ENCODE measurements at regions of chr6 and their contacts with region 1.

Region 1: GRCh38 chr6:30672445-30673253 is at the start of gene DHX16:
- DNase-seq: peak; percentile 97
- ATAC-seq: peak; percentile 88
- H3K4me3 ChIP-seq: peak within 1 kb of the TSS; percentile 85 to 100 (median 98)
- H3K4me3 Mint-ChIP-seq: peak within 1 kb of the TSS; percentile 84
- H3K27ac ChIP-seq: peak within 1 kb of the TSS; percentile 54 to 75
- H3K27ac Mint-ChIP-seq: peak within 1 kb of the TSS; percentile 87
- H3K4me1 ChIP-seq: peaks cover 10 to 19% of the 10 kb centered on the region in 2 donors
- H3K4me1 Mint-ChIP-seq: peaks cover 29% of the 10 kb centered on the region
- H3K27me3 ChIP-seq: no peaks in the 10 kb centered on the region
- H3K27me3 Mint-ChIP-seq: no peaks in the 10 kb centered on the region
- CTCF ChIP-seq: peak; percentile 79
- total RNA-seq, gene DHX16: 51.1 and 58.3 TPM in 2 replicates

Region 2: DNA sequence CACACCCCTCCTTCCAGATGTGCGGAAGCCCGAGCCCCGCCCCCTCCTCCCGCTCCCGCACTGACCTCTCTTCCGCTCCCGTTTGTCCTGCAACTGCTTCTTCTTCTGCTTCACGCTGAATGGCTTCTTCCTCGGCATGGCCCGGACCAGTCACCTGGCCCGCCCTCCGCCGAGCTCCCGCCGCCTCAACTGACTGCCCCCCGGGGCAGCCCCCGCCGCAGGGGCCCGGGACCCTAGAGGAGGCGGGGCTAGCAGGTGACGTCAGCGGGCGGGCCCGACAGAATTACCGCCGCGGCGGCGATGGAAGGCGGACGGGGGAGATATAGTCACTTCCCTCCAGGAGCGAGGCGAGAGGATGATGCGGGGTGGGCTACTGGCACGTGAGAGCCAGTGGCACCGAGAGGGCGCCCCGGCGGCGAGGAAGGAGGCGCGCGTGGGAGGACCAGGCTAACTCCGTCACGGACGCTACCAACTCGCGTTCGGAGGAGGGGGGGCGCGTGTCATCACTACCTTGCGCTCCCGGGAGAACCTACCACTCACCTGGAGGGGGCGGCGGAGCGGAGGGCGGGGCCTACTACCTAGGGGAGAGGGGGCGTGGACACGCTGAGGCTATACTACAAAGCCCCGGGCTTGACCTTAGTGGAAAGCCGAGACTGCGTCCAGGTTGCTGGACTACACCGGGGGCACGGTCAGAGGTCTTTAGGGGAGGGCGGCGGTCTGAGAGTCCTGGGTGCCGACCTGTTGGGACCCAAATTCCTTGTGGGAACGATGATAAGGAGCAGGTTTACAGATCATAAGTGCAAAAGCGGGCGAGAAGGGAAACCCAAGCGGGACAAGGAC is 116.4 kb before region 1 on chr6 and contains the start of gene GNL1:
- CTCF ChIA-PET with region 1: no interaction called
- POLR2A ChIA-PET with region 1: no interaction called
- intact Hi-C with region 1: loop called (anchors 5 kb)
- DNase-seq: peak; percentile 100
- ATAC-seq: peak; percentile 89
- H3K4me3 ChIP-seq: peak within 1 kb of the TSS; percentile 81 to 100 (median 94)
- H3K4me3 Mint-ChIP-seq: peak within 1 kb of the TSS; percentile 99
- H3K27ac ChIP-seq: peak within 1 kb of the TSS; percentile 91 to 95
- H3K27ac Mint-ChIP-seq: peak within 1 kb of the TSS; percentile 99
- H3K4me1 ChIP-seq: peaks cover 19 to 27% of the 10 kb centered on the region in 2 donors
- H3K4me1 Mint-ChIP-seq: peaks cover 32% of the 10 kb centered on the region
- H3K27me3 ChIP-seq: no peaks in the 10 kb centered on the region
- H3K27me3 Mint-ChIP-seq: no peaks in the 10 kb centered on the region
- CTCF ChIP-seq: no peak
- total RNA-seq, gene GNL1: 107 and 109 TPM in 2 replicates

Region 3: DNA sequence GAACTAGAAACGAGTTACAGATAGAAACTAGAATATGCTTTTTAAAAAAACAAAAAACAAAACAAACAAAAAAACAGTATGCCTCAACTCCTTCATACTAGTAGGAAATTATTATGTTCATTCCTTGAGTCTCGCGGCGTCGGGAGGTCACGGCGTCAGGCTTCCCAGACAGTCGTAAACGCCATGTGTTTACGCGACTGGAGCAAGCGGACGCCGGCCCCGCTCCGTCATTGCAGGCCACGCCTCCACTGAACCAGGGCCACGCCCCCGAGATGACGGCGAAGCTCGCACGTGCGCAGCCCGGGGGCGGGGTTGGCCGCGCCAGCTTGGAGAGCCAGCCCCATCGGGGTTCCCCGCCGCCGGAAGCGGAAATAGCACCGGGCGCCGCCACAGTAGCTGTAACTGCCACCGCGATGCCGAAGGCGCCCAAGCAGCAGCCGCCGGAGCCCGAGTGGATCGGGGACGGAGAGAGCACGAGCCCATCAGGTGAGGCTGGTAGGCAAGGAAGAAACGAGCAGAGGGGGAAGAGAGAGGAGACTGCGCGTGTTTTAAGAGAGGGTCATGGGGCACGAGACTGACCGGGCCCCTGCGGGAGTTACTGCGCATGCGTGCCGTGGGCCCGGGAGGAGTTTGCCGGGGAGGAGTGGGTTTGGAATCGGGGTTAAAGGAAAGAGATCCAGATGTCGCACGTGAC is 101.4 kb before region 1 on chr6 and contains the start of gene ABCF1:
- CTCF ChIA-PET with region 1: interaction called, 3 read pairs
- POLR2A ChIA-PET with region 1: interaction called, 3 read pairs
- intact Hi-C with region 1: loop called (anchors 1 kb)
- DNase-seq: peak; percentile 99
- ATAC-seq: peak; percentile 98
- H3K4me3 ChIP-seq: peak within 1 kb of the TSS; percentile 69 to 93 (median 87)
- H3K4me3 Mint-ChIP-seq: peak within 1 kb of the TSS; percentile 96
- H3K27ac ChIP-seq: peak within 1 kb of the TSS; percentile 82 to 92
- H3K27ac Mint-ChIP-seq: peak within 1 kb of the TSS; percentile 93
- H3K4me1 ChIP-seq: peaks cover 25 to 32% of the 10 kb centered on the region in 2 donors
- H3K4me1 Mint-ChIP-seq: peaks cover 54% of the 10 kb centered on the region
- H3K27me3 ChIP-seq: no peaks in the 10 kb centered on the region
- H3K27me3 Mint-ChIP-seq: no peaks in the 10 kb centered on the region
- CTCF ChIP-seq: no peak
- total RNA-seq, gene ABCF1: 60.9 and 63.7 TPM in 2 replicates

Region 4: GRCh38 chr6:30626484-30627366 is 45.9 kb before region 1 on chr6 and contains the start of gene ATAT1:
- CTCF ChIA-PET with region 1: interaction called, 10 read pairs
- POLR2A ChIA-PET with region 1: interaction called, 5 read pairs
- intact Hi-C with region 1: loop called (anchors 1 kb)
- DNase-seq: peak; percentile 93
- ATAC-seq: peak; percentile 99
- H3K4me3 ChIP-seq: peak within 1 kb of the TSS; percentile 60 to 87 (median 72)
- H3K4me3 Mint-ChIP-seq: peak within 1 kb of the TSS; percentile 93
- H3K27ac ChIP-seq: peak within 1 kb of the TSS; percentile 84 to 87
- H3K27ac Mint-ChIP-seq: peak within 1 kb of the TSS; percentile 89
- H3K4me1 ChIP-seq: peaks cover 12 to 18% of the 10 kb centered on the region in 2 donors
- H3K4me1 Mint-ChIP-seq: peaks cover 19% of the 10 kb centered on the region
- H3K27me3 ChIP-seq: no peaks in the 10 kb centered on the region
- H3K27me3 Mint-ChIP-seq: no peaks in the 10 kb centered on the region
- CTCF ChIP-seq: peak; percentile 64
- total RNA-seq, gene ATAT1: 19.3 and 21.5 TPM in 2 replicates

Region 5: DNA sequence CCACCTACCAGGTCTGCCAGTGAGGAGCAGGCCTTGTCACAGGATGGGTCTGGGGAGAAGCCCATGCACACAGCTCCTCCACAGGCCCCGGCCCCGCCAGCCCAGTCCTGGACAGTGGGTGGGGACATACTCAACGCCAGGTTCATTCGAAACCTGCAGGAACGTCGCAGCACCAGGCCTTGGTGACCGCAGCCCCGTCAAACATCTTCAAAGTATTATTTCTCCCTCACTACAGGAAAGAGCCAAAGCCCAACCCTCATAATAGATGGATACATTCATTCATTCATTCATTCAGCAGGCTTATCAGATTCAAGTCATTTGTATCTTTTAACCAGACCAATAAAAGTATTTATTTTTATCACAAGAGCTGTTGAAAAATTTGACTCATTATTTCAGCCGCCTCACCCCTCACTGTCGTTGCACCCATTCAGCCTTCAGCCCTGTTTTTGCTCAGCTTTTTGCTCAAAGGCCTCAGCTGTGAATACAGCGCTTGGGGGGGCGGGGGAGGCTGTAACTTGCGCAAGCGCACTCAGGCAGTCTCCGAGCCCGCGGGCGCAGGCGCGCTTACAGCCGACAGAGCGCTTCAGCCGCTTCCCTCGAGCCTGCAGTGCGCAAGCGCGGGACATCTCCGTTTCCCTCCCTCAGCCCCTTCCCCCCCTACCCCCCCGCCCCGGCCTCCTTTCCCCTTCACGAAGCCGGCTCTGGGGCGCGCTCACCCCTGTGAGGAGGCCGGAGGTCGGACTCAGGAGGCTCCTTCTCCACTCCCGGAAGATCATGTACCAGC is 26.0 kb before region 1 on chr6 and contains the start of gene C6orf136:
- CTCF ChIA-PET with region 1: interaction called, 4 read pairs
- POLR2A ChIA-PET with region 1: interaction called, 4 read pairs
- intact Hi-C with region 1: loop called (anchors 1 kb)
- DNase-seq: peak; percentile 95
- ATAC-seq: peak; percentile 77
- H3K4me3 ChIP-seq: peak within 1 kb of the TSS; percentile 24 to 93 (median 80)
- H3K4me3 Mint-ChIP-seq: peak within 1 kb of the TSS; percentile 89
- H3K27ac ChIP-seq: peak within 1 kb of the TSS; percentile 76 to 89
- H3K27ac Mint-ChIP-seq: peak within 1 kb of the TSS; percentile 95
- H3K4me1 ChIP-seq: peaks cover 12 to 21% of the 10 kb centered on the region in 2 donors
- H3K4me1 Mint-ChIP-seq: peaks cover 28% of the 10 kb centered on the region
- H3K27me3 ChIP-seq: no peaks in the 10 kb centered on the region
- H3K27me3 Mint-ChIP-seq: no peaks in the 10 kb centered on the region
- CTCF ChIP-seq: no peak
- total RNA-seq, gene C6orf136: 24.9 and 37.2 TPM in 2 replicates

Region 6: GRCh38 chr6:30686908-30687658 is 14.4 kb after region 1 on chr6:
- CTCF ChIA-PET with region 1: interaction called, 123 read pairs
- POLR2A ChIA-PET with region 1: interaction called, 7 read pairs
- intact Hi-C with region 1: loop called (anchors 1 kb)
- DNase-seq: peak; percentile 90
- ATAC-seq: peak; percentile 55
- H3K4me3 ChIP-seq: peak overlapping the region; percentile 40 to 100 (median 93)
- H3K4me3 Mint-ChIP-seq: peak overlapping the region; percentile 97
- H3K27ac ChIP-seq: peak overlapping the region; percentile 93 to 97
- H3K27ac Mint-ChIP-seq: peak overlapping the region; percentile 99
- H3K4me1 ChIP-seq: peaks cover 39 to 46% of the 10 kb centered on the region in 2 donors
- H3K4me1 Mint-ChIP-seq: peaks cover 71% of the 10 kb centered on the region
- H3K27me3 ChIP-seq: no peaks in the 10 kb centered on the region
- H3K27me3 Mint-ChIP-seq: no peaks in the 10 kb centered on the region
- CTCF ChIP-seq: no peak